ENCODE measurements at regions of chr22 and their contacts with region 1.

Region 1: DNA sequence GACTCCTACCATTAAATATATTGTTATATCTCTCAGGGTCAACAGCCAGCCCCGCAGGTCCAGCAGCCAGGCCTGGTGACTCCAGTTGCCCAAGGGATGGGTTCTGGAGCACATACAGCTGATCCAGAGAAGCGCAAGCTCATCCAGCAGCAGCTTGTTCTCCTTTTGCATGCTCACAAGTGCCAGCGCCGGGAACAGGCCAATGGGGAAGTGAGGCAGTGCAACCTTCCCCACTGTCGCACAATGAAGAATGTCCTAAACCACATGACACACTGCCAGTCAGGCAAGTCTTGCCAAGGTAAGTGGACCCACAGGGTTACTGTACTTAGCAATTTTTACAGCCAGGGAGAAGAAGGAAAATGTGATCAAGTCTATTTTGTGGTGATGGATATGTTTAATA is 35.1 kb downstream of the EP300 start:
- DNase-seq: no peak
- H3K4me3 ChIP-seq: no peak overlapping the region
- H3K27ac ChIP-seq: no peak overlapping the region
- H3K4me1 ChIP-seq: no peaks in the 10 kb centered on the region
- H3K27me3 ChIP-seq: no peaks in the 10 kb centered on the region
- CTCF ChIP-seq: no peak

Region 2: GRCh38 chr22:41009202-41009943 is 118.1 kb before region 1 on chr22:
- CTCF ChIA-PET with region 1: no interaction called
- POLR2A ChIA-PET with region 1: interaction called, 23 read pairs
- intact Hi-C with region 1: no loop called
- DNase-seq: peak; percentile 51 to 77
- H3K4me3 ChIP-seq: no peak overlapping the region
- H3K27ac ChIP-seq: peak overlapping the region; percentile 44
- H3K4me1 ChIP-seq: peaks cover 18% of the 10 kb centered on the region
- H3K27me3 ChIP-seq: no peaks in the 10 kb centered on the region
- CTCF ChIP-seq: no peak